Common myeloid progenitor, CD34-positive (primary cell): ENCODE measurements at regions of chr2 and their contacts with region 1.

Region 1: GRCh38 chr2:216139884-216140283 is 30.7 kb downstream of the XRCC5 start:
- DNase-seq: peak; percentile 39 to 55 (median 50)
- H3K4me3 ChIP-seq: no peak overlapping the region
- H3K27ac ChIP-seq: no peak overlapping the region
- H3K4me1 ChIP-seq: no peaks in the 10 kb centered on the region
- H3K27me3 ChIP-seq: no peaks in the 10 kb centered on the region

Region 2: DNA sequence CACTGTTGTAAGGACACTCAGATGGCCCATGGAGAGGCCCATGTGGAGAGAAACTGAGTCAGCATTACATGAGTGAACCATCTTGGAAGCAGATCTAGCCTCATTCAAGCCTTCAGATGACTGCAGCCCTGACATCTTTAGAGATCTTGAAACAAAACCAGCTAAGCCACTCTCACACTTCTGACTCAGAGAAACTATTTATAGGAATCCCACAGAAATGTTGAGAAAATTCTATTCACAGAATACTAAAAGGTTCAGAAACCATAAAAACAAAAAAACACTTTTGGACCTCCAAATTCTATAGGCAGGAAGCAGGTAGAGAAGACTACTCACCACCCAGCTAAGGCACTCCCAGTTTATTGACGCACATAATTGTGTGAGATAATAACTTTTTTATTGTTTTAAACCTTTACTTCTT is 49.5 kb before region 1 on chr2:
- CTCF ChIA-PET with region 1: no interaction called
- POLR2A ChIA-PET with region 1: no interaction called
- DNase-seq: no peak
- H3K4me3 ChIP-seq: no peak overlapping the region
- H3K27ac ChIP-seq: no peak overlapping the region
- H3K4me1 ChIP-seq: no peaks in the 10 kb centered on the region
- H3K27me3 ChIP-seq: no peaks in the 10 kb centered on the region

Region 3: GRCh38 chr2:216119986-216120385 is 19.9 kb before region 1 on chr2:
- CTCF ChIA-PET with region 1: interaction called, 10 read pairs
- POLR2A ChIA-PET with region 1: no interaction called
- DNase-seq: no peak
- H3K4me3 ChIP-seq: no peak overlapping the region
- H3K27ac ChIP-seq: no peak overlapping the region
- H3K4me1 ChIP-seq: peaks cover 0 to 30% (median 11%) of the 10 kb centered on the region in 4 experiments
- H3K27me3 ChIP-seq: no peaks in the 10 kb centered on the region

Region 4: GRCh38 chr2:216298723-216299495 is 159.0 kb after region 1 on chr2:
- CTCF ChIA-PET with region 1: no interaction called
- POLR2A ChIA-PET with region 1: no interaction called
- DNase-seq: no peak
- H3K4me3 ChIP-seq: no peak overlapping the region
- H3K27ac ChIP-seq: no peak overlapping the region
- H3K4me1 ChIP-seq: peaks cover 0 to 6% (median 0%) of the 10 kb centered on the region in 4 experiments
- H3K27me3 ChIP-seq: no peaks in the 10 kb centered on the region